ENCODE measurements at regions of chr18 and their contacts with region 1.

Region 1: GRCh38 chr18:55781481-55781957 is 193.5 kb upstream of the TCF4 start:
- DNase-seq: peak; percentile 90
- H3K4me3 ChIP-seq: no peak overlapping the region
- H3K27ac ChIP-seq: peak overlapping the region; percentile 47
- H3K4me1 ChIP-seq: peaks cover 27% of the 10 kb centered on the region
- H3K27me3 ChIP-seq: no peaks in the 10 kb centered on the region
- CTCF ChIP-seq: peak; percentile 75 to 85
- POLR2A ChIP-seq: no peak

Region 2: GRCh38 chr18:55337908-55338521 is 443.5 kb before region 1 on chr18:
- CTCF ChIA-PET with region 1: interaction called, 42 read pairs
- POLR2A ChIA-PET with region 1: no interaction called
- dilution Hi-C with region 1: no loop called
- intact Hi-C with region 1: loop called (anchors 1 kb)
- DNase-seq: peak; percentile 92
- H3K4me3 ChIP-seq: no peak overlapping the region
- H3K27ac ChIP-seq: peak overlapping the region; percentile 83
- H3K4me1 ChIP-seq: peaks cover 45% of the 10 kb centered on the region
- H3K27me3 ChIP-seq: no peaks in the 10 kb centered on the region
- CTCF ChIP-seq: no peak
- POLR2A ChIP-seq: no peak

Region 3: GRCh38 chr18:55351980-55352714 is 429.4 kb before region 1 on chr18:
- CTCF ChIA-PET with region 1: interaction called, 12 read pairs
- POLR2A ChIA-PET with region 1: no interaction called
- dilution Hi-C with region 1: no loop called
- intact Hi-C with region 1: no loop called
- DNase-seq: no peak
- H3K4me3 ChIP-seq: no peak overlapping the region
- H3K27ac ChIP-seq: no peak overlapping the region
- H3K4me1 ChIP-seq: peaks cover 34% of the 10 kb centered on the region
- H3K27me3 ChIP-seq: no peaks in the 10 kb centered on the region
- CTCF ChIP-seq: no peak
- POLR2A ChIP-seq: no peak

Region 4: DNA sequence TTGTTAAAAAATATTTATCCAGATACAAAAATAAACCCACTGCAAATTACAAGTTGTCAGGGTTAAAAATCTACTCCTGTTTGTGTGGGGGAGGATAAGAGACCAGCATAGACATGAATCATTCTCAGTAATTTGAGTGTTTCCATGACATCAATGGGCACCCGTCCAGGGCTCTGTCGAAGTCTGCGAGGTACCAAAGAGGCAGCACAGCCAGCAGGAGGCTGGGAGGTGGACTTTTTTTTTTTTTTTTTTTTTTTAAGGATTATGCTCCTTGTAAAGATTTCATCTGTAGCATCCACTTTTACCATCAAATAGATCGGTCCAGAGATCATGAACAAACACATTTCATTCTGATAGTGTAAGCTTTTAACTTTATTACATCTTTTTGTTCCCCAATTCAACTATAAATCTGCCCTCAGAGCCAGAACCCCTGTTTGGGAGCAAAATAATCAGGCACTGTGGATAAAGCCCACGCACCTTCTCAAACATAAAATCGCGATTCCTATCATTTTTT is 375.6 kb before region 1 on chr18:
- CTCF ChIA-PET with region 1: interaction called, 14 read pairs
- POLR2A ChIA-PET with region 1: no interaction called
- dilution Hi-C with region 1: no loop called
- intact Hi-C with region 1: loop called (anchors 1 kb)
- DNase-seq: peak; percentile 97
- H3K4me3 ChIP-seq: no peak overlapping the region
- H3K27ac ChIP-seq: peak overlapping the region; percentile 73
- H3K4me1 ChIP-seq: peaks cover 48% of the 10 kb centered on the region
- H3K27me3 ChIP-seq: no peaks in the 10 kb centered on the region
- CTCF ChIP-seq: peak in 1 of 2 donors; percentile 20
- POLR2A ChIP-seq: no peak

Region 5: GRCh38 chr18:55861266-55861665 is 79.7 kb after region 1 on chr18:
- CTCF ChIA-PET with region 1: interaction called, 6 read pairs
- POLR2A ChIA-PET with region 1: no interaction called
- dilution Hi-C with region 1: no loop called
- intact Hi-C with region 1: loop called (anchors 2 kb)
- DNase-seq: peak; percentile 65
- H3K4me3 ChIP-seq: no peak overlapping the region
- H3K27ac ChIP-seq: no peak overlapping the region
- H3K4me1 ChIP-seq: peaks cover 5% of the 10 kb centered on the region
- H3K27me3 ChIP-seq: no peaks in the 10 kb centered on the region
- CTCF ChIP-seq: peak; percentile 41 to 44
- POLR2A ChIP-seq: no peak

Region 6: GRCh38 chr18:56021136-56021808 is 239.8 kb after region 1 on chr18:
- CTCF ChIA-PET with region 1: no interaction called
- POLR2A ChIA-PET with region 1: no interaction called
- dilution Hi-C with region 1: no loop called
- intact Hi-C with region 1: loop called (anchors 2 kb)
- DNase-seq: peak; percentile 86
- H3K4me3 ChIP-seq: peak overlapping the region in 1 of 3 experiments; percentile 3
- H3K27ac ChIP-seq: peak overlapping the region; percentile 93
- H3K4me1 ChIP-seq: peaks cover 35% of the 10 kb centered on the region
- H3K27me3 ChIP-seq: no peaks in the 10 kb centered on the region
- CTCF ChIP-seq: no peak
- POLR2A ChIP-seq: no peak

Measured in endothelial cell of umbilical vein (primary cell).